Uterus (tissue), 4 donors: ENCODE measurements at regions of chr17 and their contacts with region 1.

Region 1: GRCh38 chr17:75428543-75429469 is 23.3 kb upstream of the GRB2 start:
- DNase-seq: peak in 1 of 2 donors; percentile 24
- H3K4me3 ChIP-seq: no peak overlapping the region
- H3K27ac ChIP-seq: peak overlapping the region; percentile 3 to 54
- H3K4me1 ChIP-seq: no peaks in the 10 kb centered on the region
- H3K27me3 ChIP-seq: no peaks in the 10 kb centered on the region
- CTCF ChIP-seq: no peak
- POLR2A ChIP-seq: no peak

Region 2: GRCh38 chr17:75487351-75488070 is 58.7 kb after region 1 on chr17:
- intact Hi-C with region 1: no loop called
- DNase-seq: no peak
- H3K4me3 ChIP-seq: no peak overlapping the region
- H3K27ac ChIP-seq: no peak overlapping the region
- H3K4me1 ChIP-seq: no peaks in the 10 kb centered on the region
- H3K27me3 ChIP-seq: no peaks in the 10 kb centered on the region
- CTCF ChIP-seq: no peak
- POLR2A ChIP-seq: no peak

Region 3: DNA sequence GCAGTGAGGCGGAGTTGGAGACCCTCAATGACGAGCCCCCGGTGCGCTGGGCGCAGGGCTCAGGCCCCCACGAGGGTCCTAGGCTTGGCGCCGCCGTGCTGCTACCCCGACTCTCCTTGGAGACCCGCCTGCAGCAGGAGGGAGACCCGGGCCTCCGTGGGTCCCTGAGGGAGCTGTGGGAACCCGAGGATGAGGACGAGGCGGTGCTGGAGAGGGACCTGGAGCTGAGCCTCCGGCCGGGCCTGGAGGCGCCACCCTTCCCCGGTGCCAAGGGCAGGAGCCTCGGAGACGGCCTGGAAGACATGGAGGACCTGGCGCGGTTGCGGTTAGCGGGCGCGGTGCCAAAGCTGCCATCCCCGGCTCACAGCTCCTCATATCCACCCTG is 161.1 kb after region 1 on chr17:
- intact Hi-C with region 1: loop called (anchors 5 kb)
- DNase-seq: peak; percentile 43 to 45
- H3K4me3 ChIP-seq: peak overlapping the region; percentile 65 to 67
- H3K27ac ChIP-seq: peak overlapping the region; percentile 89 to 97
- H3K4me1 ChIP-seq: peaks cover 6% of the 10 kb centered on the region in 2 donors
- H3K27me3 ChIP-seq: no peaks in the 10 kb centered on the region
- CTCF ChIP-seq: no peak
- POLR2A ChIP-seq: no peak

Region 4: DNA sequence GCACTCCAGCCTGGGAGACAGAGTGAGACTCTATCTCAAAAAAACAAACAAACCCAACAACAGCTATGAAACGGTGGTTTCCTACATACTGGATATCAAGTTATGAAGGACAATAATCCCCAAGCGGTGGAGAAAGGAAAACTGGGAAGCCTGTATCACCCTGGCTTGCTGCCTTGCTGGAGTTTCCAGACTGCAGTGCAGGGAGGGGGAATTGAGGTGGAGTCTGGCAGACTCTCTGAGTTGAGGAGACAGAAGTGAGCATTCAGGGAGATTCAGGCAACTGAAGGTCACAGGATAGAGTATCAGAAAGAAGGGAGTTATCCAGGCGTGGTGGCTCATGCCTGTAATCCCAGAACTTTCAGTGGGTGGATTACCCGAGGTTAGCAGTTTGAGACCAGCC is 867.4 kb after region 1 on chr17:
- intact Hi-C with region 1: no loop called
- DNase-seq: no peak
- H3K4me3 ChIP-seq: no peak overlapping the region
- H3K27ac ChIP-seq: no peak overlapping the region
- H3K4me1 ChIP-seq: no peaks in the 10 kb centered on the region
- H3K27me3 ChIP-seq: no peaks in the 10 kb centered on the region
- CTCF ChIP-seq: no peak
- POLR2A ChIP-seq: no peak